MCF 10A (cell line): ENCODE measurements at regions of chr15 and their contacts with region 1.

Region 1: GRCh38 chr15:78065284-78065872 is 12.1 kb downstream of the TBC1D2B start:
- DNase-seq: peak; percentile 95
- H3K4me3 Mint-ChIP-seq: no peak overlapping the region
- H3K27ac Mint-ChIP-seq: no peak overlapping the region
- H3K4me1 Mint-ChIP-seq: peaks cover 39% of the 10 kb centered on the region
- H3K27me3 Mint-ChIP-seq: no peaks in the 10 kb centered on the region
- CTCF ChIP-seq: no peak

Region 2: GRCh38 chr15:77974098-77974414 is 91.3 kb before region 1 on chr15:
- CTCF ChIA-PET with region 1: no interaction called
- POLR2A ChIA-PET with region 1: no interaction called
- intact Hi-C with region 1: no loop called
- DNase-seq: peak; percentile 73
- H3K4me3 Mint-ChIP-seq: no peak overlapping the region
- H3K27ac Mint-ChIP-seq: no peak overlapping the region
- H3K4me1 Mint-ChIP-seq: peaks cover 10% of the 10 kb centered on the region
- H3K27me3 Mint-ChIP-seq: no peaks in the 10 kb centered on the region
- CTCF ChIP-seq: no peak

Region 3: GRCh38 chr15:78000091-78000926 is 65.1 kb before region 1 on chr15:
- CTCF ChIA-PET with region 1: no interaction called
- POLR2A ChIA-PET with region 1: interaction called, 4 read pairs
- intact Hi-C with region 1: loop called (anchors 5 kb)
- DNase-seq: peak; percentile 71
- H3K4me3 Mint-ChIP-seq: no peak overlapping the region
- H3K27ac Mint-ChIP-seq: peak overlapping the region; percentile 23
- H3K4me1 Mint-ChIP-seq: peaks cover 7% of the 10 kb centered on the region
- H3K27me3 Mint-ChIP-seq: no peaks in the 10 kb centered on the region
- CTCF ChIP-seq: peak; percentile 39

Region 4: DNA sequence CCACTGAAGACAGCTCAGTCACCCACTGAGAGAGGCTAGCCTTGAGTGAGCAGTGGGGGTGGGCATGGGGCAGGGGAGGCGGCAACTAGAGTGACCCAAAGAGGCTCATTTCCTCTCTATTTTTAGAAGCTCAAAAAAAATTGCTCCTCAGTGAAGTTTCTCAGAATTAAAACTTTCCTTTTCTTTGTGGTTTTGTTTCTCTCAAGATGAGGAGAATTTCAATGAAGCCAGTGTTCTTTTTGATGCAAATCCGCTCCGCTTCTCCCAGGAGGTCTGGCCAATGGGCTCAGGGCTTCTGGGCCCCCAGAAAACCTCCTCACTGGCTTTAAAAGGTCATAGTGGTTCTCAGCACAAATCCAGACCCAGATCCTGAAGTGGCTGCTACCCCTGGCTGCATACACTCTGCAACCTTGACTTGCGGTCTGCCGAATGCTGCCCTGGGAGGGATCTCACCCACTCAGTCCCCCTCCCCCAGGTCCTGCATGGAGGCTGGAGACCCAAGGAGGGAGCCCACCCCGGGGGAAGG is 169.2 kb after region 1 on chr15 and contains the start of gene ACSBG1:
- CTCF ChIA-PET with region 1: no interaction called
- POLR2A ChIA-PET with region 1: no interaction called
- intact Hi-C with region 1: no loop called
- DNase-seq: no peak
- H3K4me3 Mint-ChIP-seq: no peak within 1 kb of the TSS
- H3K27ac Mint-ChIP-seq: no peak within 1 kb of the TSS
- H3K4me1 Mint-ChIP-seq: no peaks in the 10 kb centered on the region
- H3K27me3 Mint-ChIP-seq: peaks cover 32% of the 10 kb centered on the region
- CTCF ChIP-seq: no peak
- total RNA-seq, gene ACSBG1: not detected in 2 replicates